PC-9 (cell line): ENCODE measurements at regions of chr10 and their contacts with region 1.

Region 1: DNA sequence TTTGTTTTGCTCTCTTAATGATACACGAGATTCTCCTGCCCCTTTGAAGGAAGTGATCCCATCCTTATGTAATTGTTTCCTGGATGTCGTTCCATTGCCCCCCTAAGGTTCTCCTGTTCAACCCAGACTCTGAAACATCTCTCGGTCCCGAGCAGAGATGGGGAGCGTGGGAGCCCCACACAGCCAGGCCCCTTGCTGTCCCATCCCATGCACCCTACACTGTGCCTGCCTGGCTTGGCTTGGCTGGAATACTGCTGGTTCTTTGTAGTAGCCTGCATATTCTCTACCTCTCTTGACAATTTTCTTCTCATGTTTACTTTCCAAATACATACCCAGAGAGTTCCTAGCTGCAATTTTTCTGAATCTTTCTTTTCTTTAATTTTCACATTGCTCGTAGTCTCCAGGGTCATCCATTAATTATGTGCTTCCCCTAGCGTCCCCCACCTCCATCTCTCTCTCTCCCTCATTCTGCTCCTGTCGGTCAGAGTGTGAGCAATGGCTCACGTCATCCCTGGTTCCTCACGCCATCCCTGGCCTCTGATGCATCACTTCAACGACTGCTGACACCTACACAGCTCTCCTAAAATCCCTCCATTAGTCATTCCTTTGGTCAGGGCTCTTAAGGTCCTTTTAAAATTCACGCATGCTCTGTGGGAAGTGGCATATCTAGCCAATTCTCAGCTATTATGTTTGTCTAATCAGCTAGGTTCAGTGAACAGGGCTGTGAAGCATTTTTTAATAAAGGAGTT is 32.5 kb upstream of the GPR158 start:
- DNase-seq: no peak
- H3K4me3 ChIP-seq: no peak overlapping the region
- H3K27ac ChIP-seq: no peak overlapping the region
- H3K4me1 ChIP-seq: no peaks in the 10 kb centered on the region
- H3K27me3 ChIP-seq: no peaks in the 10 kb centered on the region
- CTCF ChIP-seq: no peak

Region 2: GRCh38 chr10:25059764-25060389 is 82.4 kb before region 1 on chr10:
- CTCF ChIA-PET with region 1: no interaction called
- POLR2A ChIA-PET with region 1: no interaction called
- intact Hi-C with region 1: no loop called
- DNase-seq: peak; percentile 84 to 88
- H3K4me3 ChIP-seq: no peak overlapping the region; the same call in 1 of the 2 replicates
- H3K27ac ChIP-seq: peak overlapping the region; percentile 89
- H3K4me1 ChIP-seq: peaks cover 42% of the 10 kb centered on the region
- H3K27me3 ChIP-seq: no peaks in the 10 kb centered on the region
- CTCF ChIP-seq: no peak

Region 3: DNA sequence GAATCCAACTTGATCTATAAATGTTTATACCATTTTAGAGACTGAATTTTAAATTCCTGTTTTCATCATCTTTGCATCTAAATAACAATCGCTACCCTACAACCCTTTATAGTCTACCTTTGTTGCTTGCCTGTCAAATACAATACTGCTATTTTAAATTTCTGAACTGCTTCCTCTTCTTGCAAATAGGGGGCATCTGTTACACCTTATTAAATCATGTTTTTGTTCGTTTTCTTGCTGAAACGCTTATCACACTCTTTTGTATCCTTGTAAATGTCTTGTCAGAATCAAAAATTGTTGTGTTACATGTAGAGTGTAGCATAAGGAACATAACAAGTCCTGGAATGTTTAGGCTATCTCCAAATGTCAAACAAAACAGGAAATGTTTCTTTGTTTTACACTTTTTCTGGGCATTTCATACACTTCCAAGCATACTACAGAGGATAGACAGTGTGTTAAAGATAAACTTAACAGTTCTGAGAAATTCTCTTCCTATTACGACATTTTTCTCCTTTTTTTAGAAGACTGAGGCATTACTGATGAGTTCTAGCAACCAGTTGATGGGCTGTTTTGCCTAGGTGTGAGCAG is 313.8 kb after region 1 on chr10:
- CTCF ChIA-PET with region 1: interaction called, 15 read pairs
- POLR2A ChIA-PET with region 1: no interaction called
- intact Hi-C with region 1: no loop called
- DNase-seq: no peak
- H3K4me3 ChIP-seq: no peak overlapping the region
- H3K27ac ChIP-seq: no peak overlapping the region
- H3K4me1 ChIP-seq: no peaks in the 10 kb centered on the region
- H3K27me3 ChIP-seq: no peaks in the 10 kb centered on the region
- CTCF ChIP-seq: no peak